ENCODE measurements at regions of chr4 and their contacts with region 1.

Region 1: DNA sequence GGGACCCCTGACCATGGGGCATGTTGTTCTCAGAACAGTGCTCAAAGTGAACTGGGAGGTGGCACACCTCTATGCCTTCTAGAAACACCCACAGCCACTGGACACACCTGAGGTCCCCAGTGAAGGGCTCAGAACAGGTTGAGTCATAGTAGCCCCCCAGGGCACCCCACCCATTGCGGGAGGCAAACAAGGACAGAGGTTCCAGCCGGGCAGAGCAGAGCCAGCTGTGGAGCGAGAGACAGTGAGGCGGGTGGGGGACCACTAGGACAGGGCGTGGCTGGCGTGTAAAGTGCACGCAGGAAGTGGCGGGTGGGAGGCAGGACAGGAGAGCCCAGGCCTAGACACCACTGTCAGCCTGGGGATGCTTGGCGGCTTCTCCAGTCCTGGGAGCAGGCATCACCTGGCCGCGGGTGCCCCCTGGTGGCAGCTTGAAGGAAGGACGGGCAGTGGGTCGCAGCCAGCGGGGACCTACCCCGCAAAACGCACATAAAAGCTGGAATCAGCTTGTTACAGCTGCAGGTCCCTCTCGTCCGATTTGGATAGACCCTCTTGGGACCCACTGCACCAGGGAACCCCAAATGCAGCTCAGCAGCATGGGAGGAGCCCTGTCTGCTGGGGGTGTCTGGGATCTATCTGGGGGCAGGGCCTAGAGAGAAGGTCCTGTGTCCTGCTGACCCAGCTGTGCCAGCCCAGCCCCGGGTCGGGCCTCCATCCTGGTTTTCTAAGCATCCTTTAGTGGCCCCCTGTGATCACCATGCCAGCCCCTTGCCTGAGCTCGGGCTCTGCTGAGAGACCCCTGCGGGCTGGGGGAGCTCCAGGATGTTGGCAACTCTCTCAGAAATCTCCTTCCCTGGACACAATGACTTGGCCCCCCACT is 57.6 kb downstream of the WFS1 start:
- DNase-seq: peak; percentile 90
- H3K4me3 ChIP-seq: no peak overlapping the region
- H3K27ac ChIP-seq: no peak overlapping the region
- H3K4me1 ChIP-seq: no peaks in the 10 kb centered on the region
- H3K27me3 ChIP-seq: peaks cover 0 to 17% (median 0%) of the 10 kb centered on the region in 3 donors
- CTCF ChIP-seq: peak; percentile 90 to 94 (median 92)
- EP300 ChIP-seq: no peak
- POLR2A ChIP-seq: no peak

Region 2: GRCh38 chr4:5998333-5998936 is 328.8 kb before region 1 on chr4:
- intact Hi-C with region 1: loop called (anchors 5 kb)
- DNase-seq: peak; percentile 68
- H3K4me3 ChIP-seq: no peak overlapping the region
- H3K27ac ChIP-seq: no peak overlapping the region
- H3K4me1 ChIP-seq: no peaks in the 10 kb centered on the region
- H3K27me3 ChIP-seq: peaks cover 0 to 42% (median 5%) of the 10 kb centered on the region in 3 donors
- CTCF ChIP-seq: peak; percentile 54 to 89 (median 70)
- EP300 ChIP-seq: no peak
- POLR2A ChIP-seq: no peak

Region 3: DNA sequence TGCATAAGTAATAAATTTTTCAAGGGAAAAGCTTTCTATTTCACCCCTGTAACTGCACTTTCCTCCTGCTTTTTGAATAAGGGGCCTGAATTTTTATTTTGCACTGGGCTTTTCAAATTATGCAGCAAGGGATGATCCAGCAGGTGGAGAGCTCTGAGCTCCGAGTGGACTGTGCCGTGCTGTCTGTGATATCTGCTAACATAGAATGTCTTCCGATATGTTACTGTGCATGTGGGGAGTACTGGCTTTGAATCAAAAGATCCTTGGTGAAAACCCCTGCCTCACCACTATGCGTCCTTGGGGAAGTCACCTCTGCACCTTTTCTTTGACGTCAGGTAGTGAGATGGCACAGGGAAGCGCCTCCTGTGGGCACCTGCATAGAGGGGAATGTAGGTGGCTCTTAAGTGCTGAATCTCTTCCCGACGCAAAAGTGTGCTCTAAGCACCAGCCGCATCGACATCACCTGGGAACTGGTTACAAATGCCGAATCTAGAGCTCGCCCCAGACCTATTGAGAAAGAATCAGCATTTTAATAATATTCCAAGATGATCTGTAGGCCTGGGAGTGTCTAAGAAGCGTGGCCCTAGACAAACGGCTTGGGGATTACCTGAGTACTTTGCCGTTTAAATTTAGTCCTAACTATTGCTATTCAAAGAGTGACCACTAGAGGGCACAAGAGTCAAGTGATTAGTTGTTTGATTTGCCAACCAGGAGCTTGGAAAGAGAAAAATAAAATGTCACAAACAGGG is 76.9 kb before region 1 on chr4:
- intact Hi-C with region 1: loop called (anchors 1 kb)
- DNase-seq: no peak
- H3K4me3 ChIP-seq: no peak overlapping the region
- H3K27ac ChIP-seq: no peak overlapping the region
- H3K4me1 ChIP-seq: peaks cover 0 to 6% (median 5%) of the 10 kb centered on the region in 4 donors
- H3K27me3 ChIP-seq: peaks cover 0 to 36% (median 20%) of the 10 kb centered on the region in 3 donors
- CTCF ChIP-seq: peak; percentile 49 to 87 (median 72)
- EP300 ChIP-seq: no peak
- POLR2A ChIP-seq: no peak

Region 4: DNA sequence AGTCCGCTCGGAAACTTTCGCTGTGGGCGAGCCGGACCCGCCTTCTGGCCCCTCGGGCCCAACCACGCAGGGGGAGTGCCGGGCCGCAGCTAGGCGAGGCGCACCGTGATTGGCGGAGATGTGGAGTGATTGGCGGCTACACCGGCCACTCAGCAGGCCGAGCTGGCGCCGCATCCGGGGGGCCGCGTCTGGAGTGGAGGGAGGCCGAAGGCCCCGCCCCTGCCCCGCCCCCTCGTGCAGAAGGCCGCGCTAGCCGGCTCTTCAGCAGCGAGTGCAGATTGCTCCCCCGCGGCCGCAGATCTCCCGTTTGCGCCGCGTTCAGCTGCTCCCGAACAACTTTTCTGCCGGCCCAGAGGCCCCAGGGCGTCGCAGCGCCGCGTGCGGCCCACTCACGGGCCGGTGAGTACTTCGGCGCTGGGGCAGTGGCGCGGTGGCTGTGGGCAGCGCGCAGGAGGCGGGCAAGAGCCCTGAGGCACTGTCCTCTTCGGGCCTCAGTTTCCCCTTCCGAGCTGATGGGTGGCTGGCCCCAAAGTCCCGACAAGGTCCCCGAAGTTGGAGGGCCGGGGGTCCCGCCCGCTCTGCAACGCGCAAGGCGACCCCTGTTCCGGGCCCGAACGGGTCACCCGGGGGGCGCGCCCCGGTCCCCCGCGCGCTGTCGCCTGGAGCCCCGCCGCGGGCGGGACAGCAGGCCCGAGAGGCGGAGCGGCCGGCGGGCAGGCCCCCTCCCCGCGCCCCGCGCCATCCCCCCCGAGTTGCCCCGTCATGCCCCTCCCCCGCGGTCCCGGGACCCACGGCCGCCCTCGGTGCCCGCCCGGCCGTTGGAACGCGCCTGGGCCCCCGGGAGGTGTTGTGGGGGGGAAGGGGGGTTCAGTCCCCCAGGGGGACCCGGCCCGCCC is 57.4 kb before region 1 on chr4 and contains the start of gene WFS1:
- intact Hi-C with region 1: loop called (anchors 5 kb)
- DNase-seq: peak; percentile 99
- H3K4me3 ChIP-seq: peak within 1 kb of the TSS; percentile 64 to 86 (median 84)
- H3K27ac ChIP-seq: peak within 1 kb of the TSS; percentile 87 to 96 (median 91)
- H3K4me1 ChIP-seq: peaks cover 0 to 54% (median 50%) of the 10 kb centered on the region in 4 donors
- H3K27me3 ChIP-seq: no peaks in the 10 kb centered on the region
- CTCF ChIP-seq: no peak
- EP300 ChIP-seq: no peak
- POLR2A ChIP-seq: peak; percentile 69 to 82
- total RNA-seq, gene WFS1: 34.6 to 69.0 (median 47.2) TPM

Region 5: GRCh38 chr4:6546681-6547447 is 219.6 kb after region 1 on chr4:
- intact Hi-C with region 1: loop called (anchors 5 kb)
- DNase-seq: no peak
- H3K4me3 ChIP-seq: no peak overlapping the region
- H3K27ac ChIP-seq: no peak overlapping the region
- H3K4me1 ChIP-seq: no peaks in the 10 kb centered on the region
- H3K27me3 ChIP-seq: peaks cover 0 to 30% (median 3%) of the 10 kb centered on the region in 3 donors
- CTCF ChIP-seq: peak in 3 of 4 experiments; percentile 65 to 80 (median 74)
- EP300 ChIP-seq: no peak
- POLR2A ChIP-seq: no peak